ENCODE measurements at regions of chr14 and their contacts with region 1.

Region 1: DNA sequence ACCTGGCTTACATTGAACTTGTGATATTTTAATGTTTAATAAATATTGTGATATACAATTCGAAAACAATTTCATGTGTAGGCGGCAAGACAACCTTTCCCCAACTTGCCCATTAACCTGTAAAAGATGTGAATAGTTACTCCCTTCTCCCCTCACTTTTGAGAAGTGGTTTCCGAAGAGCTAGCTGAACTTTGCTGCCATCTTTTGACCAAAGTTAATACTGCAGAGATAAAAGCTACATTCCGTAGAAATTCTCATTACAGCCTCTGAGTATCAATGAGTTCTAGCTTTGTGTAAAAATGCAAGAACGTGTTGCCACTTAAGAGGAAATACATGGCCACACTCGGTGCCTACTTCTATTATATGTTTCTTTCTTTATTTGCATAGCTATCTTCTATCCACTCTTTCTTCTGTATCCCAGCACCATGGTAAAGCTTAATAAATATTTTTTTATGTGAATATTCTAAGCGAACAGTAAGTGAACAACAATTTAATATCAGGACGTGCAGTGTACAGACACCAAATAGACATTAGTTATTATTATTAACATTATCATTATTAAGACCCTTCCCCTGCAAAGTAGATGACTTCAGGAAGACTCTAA is 105.1 kb upstream of the TMEM260 start:
- DNase-seq: no peak
- ATAC-seq: peak; percentile 52
- H3K4me3 Mint-ChIP-seq: no peak overlapping the region
- H3K27ac Mint-ChIP-seq: no peak overlapping the region
- H3K4me1 Mint-ChIP-seq: no peaks in the 10 kb centered on the region
- H3K27me3 Mint-ChIP-seq: no peaks in the 10 kb centered on the region
- CTCF ChIP-seq: peak; percentile 47

Region 2: DNA sequence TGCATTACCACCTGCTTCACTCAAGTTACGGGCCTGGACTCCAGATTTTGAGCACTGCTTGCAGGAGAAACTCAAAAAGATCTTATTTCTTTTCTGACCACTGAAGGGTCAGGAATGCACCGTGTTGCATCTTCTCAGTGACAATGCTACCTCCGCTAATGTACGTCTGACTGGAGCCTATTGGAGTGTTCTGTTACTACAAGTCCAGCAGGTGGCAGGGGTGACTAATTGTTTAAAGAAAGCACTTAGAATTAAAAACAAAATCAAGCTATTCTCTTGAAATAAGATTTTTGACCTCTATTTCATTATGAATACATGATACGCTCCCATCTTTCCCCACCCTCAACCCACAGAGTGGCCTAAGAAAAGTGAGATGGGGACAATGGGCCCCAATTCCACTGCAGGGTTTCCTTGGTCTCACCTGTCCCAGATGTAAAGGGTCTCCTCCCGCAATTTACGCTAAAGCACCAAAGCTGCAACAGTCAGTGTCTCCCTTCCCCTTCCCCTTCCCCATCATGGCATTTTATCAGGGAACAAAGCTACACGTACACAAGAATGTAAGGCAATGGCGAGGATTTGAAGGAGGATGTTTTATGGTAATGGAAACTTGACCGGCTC is 1036.3 kb before region 1 on chr14:
- CTCF ChIA-PET with region 1: interaction called, 10 read pairs
- POLR2A ChIA-PET with region 1: no interaction called
- DNase-seq: no peak
- ATAC-seq: peak; percentile 51
- H3K4me3 Mint-ChIP-seq: no peak overlapping the region
- H3K27ac Mint-ChIP-seq: no peak overlapping the region
- H3K4me1 Mint-ChIP-seq: peaks cover 11% of the 10 kb centered on the region
- H3K27me3 Mint-ChIP-seq: no peaks in the 10 kb centered on the region
- CTCF ChIP-seq: peak; percentile 39

Region 3: GRCh38 chr14:55731881-55732498 is 742.5 kb before region 1 on chr14:
- CTCF ChIA-PET with region 1: interaction called, 26 read pairs
- POLR2A ChIA-PET with region 1: no interaction called
- DNase-seq: peak; percentile 59
- ATAC-seq: peak; percentile 79
- H3K4me3 Mint-ChIP-seq: no peak overlapping the region
- H3K27ac Mint-ChIP-seq: no peak overlapping the region
- H3K4me1 Mint-ChIP-seq: no peaks in the 10 kb centered on the region
- H3K27me3 Mint-ChIP-seq: no peaks in the 10 kb centered on the region
- CTCF ChIP-seq: peak; percentile 62

Region 4: GRCh38 chr14:56422703-56423213 is 51.8 kb before region 1 on chr14:
- CTCF ChIA-PET with region 1: interaction called, 11 read pairs
- POLR2A ChIA-PET with region 1: no interaction called
- DNase-seq: peak; percentile 15
- ATAC-seq: peak; percentile 93
- H3K4me3 Mint-ChIP-seq: no peak overlapping the region
- H3K27ac Mint-ChIP-seq: no peak overlapping the region
- H3K4me1 Mint-ChIP-seq: peaks cover 14% of the 10 kb centered on the region
- H3K27me3 Mint-ChIP-seq: no peaks in the 10 kb centered on the region
- CTCF ChIP-seq: peak; percentile 47

Region 5: GRCh38 chr14:56491299-56492285 is 17.1 kb after region 1 on chr14:
- CTCF ChIA-PET with region 1: interaction called, 12 read pairs
- POLR2A ChIA-PET with region 1: no interaction called
- DNase-seq: peak; percentile 72
- ATAC-seq: peak; percentile 95
- H3K4me3 Mint-ChIP-seq: no peak overlapping the region
- H3K27ac Mint-ChIP-seq: no peak overlapping the region
- H3K4me1 Mint-ChIP-seq: peaks cover 18% of the 10 kb centered on the region
- H3K27me3 Mint-ChIP-seq: no peaks in the 10 kb centered on the region; the same call in 1 of the 2 replicates
- CTCF ChIP-seq: peak; percentile 64